ENCODE measurements at regions of chr13 and their contacts with region 1.

Region 1: GRCh38 chr13:25345576-25345975 is 26.2 kb upstream of the ATP8A2 start:
- DNase-seq: no peak
- H3K4me3 ChIP-seq: no peak overlapping the region
- CTCF ChIP-seq: no peak
- POLR2A ChIP-seq: no peak

Region 2: GRCh38 chr13:25306671-25307464 is 38.7 kb before region 1 on chr13:
- intact Hi-C with region 1: loop called (anchors 1 kb)
- DNase-seq: no peak
- H3K4me3 ChIP-seq: no peak overlapping the region
- CTCF ChIP-seq: no peak
- POLR2A ChIP-seq: no peak

Region 3: DNA sequence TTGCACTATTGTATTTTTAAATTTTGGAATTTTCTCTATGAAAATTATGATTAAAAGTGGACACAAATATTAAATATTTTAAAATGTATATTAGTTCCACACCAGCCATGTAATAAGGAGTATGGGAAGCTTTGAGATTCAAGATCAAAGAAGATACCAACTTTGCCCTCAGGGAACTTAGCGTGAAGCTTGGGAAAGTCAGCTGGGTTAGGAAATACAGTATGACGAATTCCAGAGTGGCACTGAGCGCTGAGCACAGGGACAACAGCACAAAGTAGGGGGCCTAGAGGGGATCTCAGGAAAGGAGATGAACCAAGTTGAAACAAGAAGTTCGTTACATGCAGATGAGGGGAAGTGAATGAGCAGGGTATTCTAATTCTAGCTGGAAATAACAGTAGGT is 783.1 kb after region 1 on chr13:
- intact Hi-C with region 1: no loop called
- DNase-seq: no peak
- H3K4me3 ChIP-seq: no peak overlapping the region
- CTCF ChIP-seq: no peak
- POLR2A ChIP-seq: no peak

Measured in lower leg skin (tissue), 4 donors.